Stomach (tissue), 19 donors: ENCODE measurements at regions of chr6 and their contacts with region 1.

Region 1: GRCh38 chr6:56902641-56903464 is 52.1 kb upstream of the BEND6 start:
- DNase-seq: peak in 1 of 2 donors; percentile 74
- H3K4me3 ChIP-seq: no peak overlapping the region
- H3K27ac ChIP-seq: peak overlapping the region in 1 of 5 donors; percentile 27
- H3K4me1 ChIP-seq: peaks cover 0 to 10% (median 6%) of the 10 kb centered on the region in 4 donors
- H3K27me3 ChIP-seq: no peaks in the 10 kb centered on the region
- CTCF ChIP-seq: peak in 4 of 7 experiments; percentile 51 to 79 (median 62)
- EP300 ChIP-seq: no peak
- POLR2A ChIP-seq: no peak

Region 2: DNA sequence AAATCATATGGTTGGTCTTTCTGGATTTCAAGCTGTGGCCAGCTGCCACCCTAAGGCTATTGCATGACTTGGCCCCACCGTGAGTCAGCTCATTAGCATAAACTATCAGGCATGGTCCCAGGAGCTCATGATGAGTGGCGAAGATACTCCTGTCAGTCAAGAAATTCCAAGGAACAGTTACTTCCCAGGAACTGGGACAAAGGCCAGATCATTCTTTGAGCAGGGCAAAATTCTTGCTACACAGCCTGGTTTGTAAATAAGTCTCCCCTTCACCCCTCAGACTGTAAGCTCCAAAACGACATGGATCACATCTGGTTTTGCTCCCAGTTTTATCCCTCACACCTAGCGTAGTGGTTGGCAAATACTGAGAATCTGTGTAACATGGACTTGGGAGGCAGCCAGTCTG is 110.7 kb after region 1 on chr6:
- intact Hi-C with region 1: loop called (anchors 10 kb)
- DNase-seq: peak in 1 of 2 donors; percentile 7
- H3K4me3 ChIP-seq: no peak overlapping the region
- H3K27ac ChIP-seq: no peak overlapping the region
- H3K4me1 ChIP-seq: no peaks in the 10 kb centered on the region
- H3K27me3 ChIP-seq: no peaks in the 10 kb centered on the region
- CTCF ChIP-seq: no peak
- EP300 ChIP-seq: no peak
- POLR2A ChIP-seq: no peak